Activated CD4-positive, alpha-beta memory T cell treated with anti-CD3 and anti-CD28 coated beads for 36 hours (primary cell): ENCODE measurements at regions of chr4 and their contacts with region 1.

Region 1: GRCh38 chr4:158821228-158821971 is 52.6 kb downstream of the FNIP2 start:
- DNase-seq: peak; percentile 62
- H3K4me3 Mint-ChIP-seq: no peak overlapping the region
- H3K27ac Mint-ChIP-seq: peak overlapping the region; percentile 63
- H3K4me1 Mint-ChIP-seq: peaks cover 78% of the 10 kb centered on the region
- H3K27me3 Mint-ChIP-seq: no peaks in the 10 kb centered on the region

Region 2: GRCh38 chr4:158671915-158672806 is 149.2 kb before region 1 on chr4 and contains the start of gene ETFDH:
- CTCF ChIA-PET with region 1: no interaction called
- POLR2A ChIA-PET with region 1: no interaction called
- intact Hi-C with region 1: loop called (anchors 2 kb)
- DNase-seq: peak; percentile 99
- H3K4me3 Mint-ChIP-seq: peak within 1 kb of the TSS; percentile 99
- H3K27ac Mint-ChIP-seq: peak within 1 kb of the TSS; percentile 93
- H3K4me1 Mint-ChIP-seq: peaks cover 20% of the 10 kb centered on the region
- H3K27me3 Mint-ChIP-seq: no peaks in the 10 kb centered on the region
- total RNA-seq, gene ETFDH: 30.8 to 30.9 TPM

Region 3: DNA sequence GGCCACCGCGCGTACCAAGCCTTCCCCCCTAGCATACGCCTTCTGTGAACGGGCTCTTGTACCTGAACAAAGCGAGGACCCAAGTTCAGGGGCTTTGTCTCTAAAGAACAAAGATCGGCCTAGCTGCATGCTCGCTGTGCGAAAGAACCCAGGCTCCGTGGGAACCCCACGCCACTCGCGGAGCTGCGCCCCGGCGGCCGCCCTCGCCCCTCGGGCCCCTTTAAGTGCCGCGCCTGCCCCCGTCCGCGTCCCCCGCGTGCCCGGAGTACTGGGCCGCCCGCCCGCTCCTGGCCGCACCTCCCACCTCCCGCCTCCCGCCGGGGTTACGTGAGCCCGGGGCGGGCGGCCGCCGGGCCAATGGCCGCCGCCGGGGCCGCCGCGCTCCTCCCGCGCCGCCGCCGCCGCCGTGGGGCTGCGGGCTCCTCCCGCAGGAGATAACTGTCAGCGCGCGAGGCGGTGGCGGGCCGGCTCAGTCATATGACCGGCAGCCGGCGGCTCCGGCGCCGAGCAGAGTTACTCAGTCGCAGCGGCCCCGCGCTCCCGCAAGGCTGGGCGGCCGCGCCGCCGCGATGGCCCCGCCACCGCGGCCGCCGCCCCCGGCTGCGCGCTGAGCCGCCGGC is 52.7 kb before region 1 on chr4 and contains the start of gene FNIP2:
- CTCF ChIA-PET with region 1: interaction called, 3 read pairs
- POLR2A ChIA-PET with region 1: interaction called, 11 read pairs
- intact Hi-C with region 1: loop called (anchors 1 kb)
- DNase-seq: peak; percentile 73
- H3K4me3 Mint-ChIP-seq: peak within 1 kb of the TSS; percentile 100
- H3K27ac Mint-ChIP-seq: peak within 1 kb of the TSS; percentile 91
- H3K4me1 Mint-ChIP-seq: peaks cover 43% of the 10 kb centered on the region
- H3K27me3 Mint-ChIP-seq: peaks cover 2% of the 10 kb centered on the region
- total RNA-seq, gene FNIP2: 17.7 to 19.4 TPM

Region 4: GRCh38 chr4:158809611-158810486 is 11.6 kb before region 1 on chr4:
- CTCF ChIA-PET with region 1: interaction called, 3 read pairs
- POLR2A ChIA-PET with region 1: interaction called, 8 read pairs
- intact Hi-C with region 1: loop called (anchors 1 kb)
- DNase-seq: no peak
- H3K4me3 Mint-ChIP-seq: peak overlapping the region; percentile 36
- H3K27ac Mint-ChIP-seq: peak overlapping the region; percentile 64
- H3K4me1 Mint-ChIP-seq: peaks cover 46% of the 10 kb centered on the region
- H3K27me3 Mint-ChIP-seq: no peaks in the 10 kb centered on the region

Region 5: DNA sequence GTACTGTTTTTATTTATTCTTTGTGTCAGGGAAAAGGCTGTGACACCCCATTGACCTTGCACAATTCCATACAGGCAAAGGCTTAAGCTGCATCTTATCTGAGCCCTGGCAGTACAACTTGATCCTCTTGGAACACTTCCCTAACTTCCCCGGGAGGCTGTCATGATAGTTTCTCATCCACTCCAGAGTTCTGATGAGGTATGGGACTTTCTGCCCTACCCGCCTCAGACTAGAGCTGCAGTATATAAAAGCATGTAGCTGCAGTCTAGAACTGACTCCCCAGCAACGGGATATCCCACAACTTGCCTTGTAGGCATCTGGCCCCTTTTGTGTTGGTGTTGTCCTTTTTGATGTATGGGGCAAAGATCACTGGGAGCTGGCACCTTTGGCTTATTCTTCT is 20.1 kb after region 1 on chr4:
- CTCF ChIA-PET with region 1: no interaction called
- POLR2A ChIA-PET with region 1: no interaction called
- intact Hi-C with region 1: no loop called
- DNase-seq: no peak
- H3K4me3 Mint-ChIP-seq: no peak overlapping the region
- H3K27ac Mint-ChIP-seq: no peak overlapping the region
- H3K4me1 Mint-ChIP-seq: no peaks in the 10 kb centered on the region
- H3K27me3 Mint-ChIP-seq: no peaks in the 10 kb centered on the region

Region 6: DNA sequence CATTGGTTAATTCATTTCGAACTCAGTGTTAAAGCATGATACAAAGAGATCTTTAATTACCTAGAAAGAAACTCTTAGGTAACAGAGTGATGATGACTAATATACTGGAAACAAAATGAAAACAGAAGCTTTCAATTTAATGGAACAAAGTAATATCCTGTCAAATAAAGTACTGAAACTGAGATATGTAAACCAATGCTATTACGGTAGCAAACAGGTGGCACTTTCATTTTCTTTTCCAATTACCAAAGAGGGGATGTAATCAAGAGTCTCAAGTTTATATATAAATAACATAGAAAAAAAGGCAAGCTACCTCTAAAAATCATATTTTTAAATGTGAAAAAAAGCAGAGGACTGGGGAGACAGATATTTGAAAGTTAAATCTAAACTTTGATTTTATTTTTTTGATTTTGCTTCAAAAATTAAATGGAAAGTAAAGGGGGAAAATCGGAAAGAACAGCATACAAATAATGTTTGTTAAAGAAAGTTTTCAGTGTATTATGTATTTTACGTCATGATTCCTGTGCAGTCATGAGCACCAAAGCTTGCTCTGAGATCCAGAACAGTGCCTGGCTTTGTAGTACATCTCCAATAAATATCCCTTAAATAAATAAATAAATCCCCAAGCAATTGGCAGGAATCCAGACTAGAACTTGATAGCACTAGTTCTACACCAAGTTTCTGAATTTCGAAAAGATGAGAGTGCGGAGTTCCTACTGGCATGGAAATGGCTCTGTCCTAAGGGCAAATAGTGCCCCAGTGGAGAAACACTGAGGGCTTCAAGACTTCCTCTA is 256.5 kb after region 1 on chr4:
- CTCF ChIA-PET with region 1: no interaction called
- POLR2A ChIA-PET with region 1: no interaction called
- intact Hi-C with region 1: loop called (anchors 5 kb)
- DNase-seq: no peak
- H3K4me3 Mint-ChIP-seq: no peak overlapping the region
- H3K27ac Mint-ChIP-seq: no peak overlapping the region
- H3K4me1 Mint-ChIP-seq: peaks cover 22% of the 10 kb centered on the region
- H3K27me3 Mint-ChIP-seq: no peaks in the 10 kb centered on the region